Activated CD8-positive, alpha-beta T cell treated with anti-CD3 and anti-CD28 coated beads, Interleukin-2, amount 10 ng/mL, durations not matched to agents 7 days and 5 days (primary cell): ENCODE measurements at regions of chr5 and their contacts with region 1.

Region 1: DNA sequence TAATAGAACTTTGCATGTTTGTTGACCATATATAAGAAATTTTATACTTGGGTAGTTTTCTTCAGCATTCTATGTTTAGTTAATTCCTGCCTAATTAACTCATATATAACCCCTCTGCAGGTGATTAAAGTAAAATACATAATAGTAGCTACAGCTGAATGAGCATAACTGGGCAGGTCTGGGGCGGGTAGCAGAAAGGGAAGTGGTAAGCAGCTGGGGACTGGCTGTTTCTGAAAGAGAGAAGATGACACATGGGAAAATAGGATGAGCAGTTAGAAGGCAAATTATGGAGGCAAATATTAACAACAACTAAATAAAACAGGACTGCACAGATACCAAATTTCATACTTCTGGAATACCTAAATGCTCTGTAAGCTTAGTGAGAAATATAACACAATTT is 128.1 kb downstream of the CPLANE1 start:
- DNase-seq: no peak
- ATAC-seq: no peak
- H3K4me3 Mint-ChIP-seq: no peak overlapping the region
- H3K27ac Mint-ChIP-seq: no peak overlapping the region
- H3K4me1 Mint-ChIP-seq: peaks cover 19% of the 10 kb centered on the region
- H3K27me3 Mint-ChIP-seq: no peaks in the 10 kb centered on the region

Region 2: DNA sequence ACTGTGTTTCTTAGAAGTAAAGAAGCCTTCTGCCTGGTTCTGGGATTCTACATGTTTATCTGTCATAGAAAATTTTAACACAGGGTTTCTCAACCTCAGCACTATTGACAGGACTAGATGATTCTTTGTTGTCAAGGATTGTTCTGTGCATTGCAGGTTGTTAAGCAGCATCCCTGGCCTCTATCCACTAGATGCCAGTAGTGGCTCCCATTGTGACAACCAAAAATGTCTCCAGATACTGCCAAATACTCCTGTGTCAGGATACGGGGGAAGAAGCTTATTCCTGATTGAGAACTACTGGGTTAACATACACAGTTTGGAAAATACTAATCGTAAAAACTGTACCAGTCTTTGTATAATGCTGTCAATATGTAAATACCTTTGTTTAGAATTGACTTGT is 77.3 kb before region 1 on chr5:
- CTCF ChIA-PET with region 1: interaction called, 10 read pairs
- POLR2A ChIA-PET with region 1: no interaction called
- DNase-seq: peak; percentile 24
- ATAC-seq: no peak
- H3K4me3 Mint-ChIP-seq: no peak overlapping the region
- H3K27ac Mint-ChIP-seq: no peak overlapping the region
- H3K4me1 Mint-ChIP-seq: peaks cover 1% of the 10 kb centered on the region
- H3K27me3 Mint-ChIP-seq: no peaks in the 10 kb centered on the region

Region 3: DNA sequence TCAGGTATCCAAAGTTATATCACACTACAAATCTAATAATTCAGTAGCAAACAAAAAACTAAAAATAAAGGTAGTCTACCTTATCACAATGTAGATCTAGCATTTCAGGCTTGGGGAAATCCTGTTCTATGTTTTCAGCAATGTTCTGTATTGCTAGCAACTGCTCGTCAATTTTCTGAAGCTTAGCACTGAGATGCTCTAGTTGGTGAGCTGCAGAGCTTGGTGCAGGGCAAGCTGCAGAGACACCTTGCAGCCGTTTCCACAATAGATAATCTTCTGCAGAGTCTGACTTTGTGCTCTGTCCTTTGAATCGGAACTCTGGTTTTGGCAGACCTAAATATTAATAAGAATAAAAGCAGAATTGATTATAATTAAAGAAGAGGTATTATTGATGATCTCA is 32.6 kb after region 1 on chr5:
- CTCF ChIA-PET with region 1: no interaction called
- POLR2A ChIA-PET with region 1: no interaction called
- DNase-seq: no peak
- ATAC-seq: no peak
- H3K4me3 Mint-ChIP-seq: no peak overlapping the region
- H3K27ac Mint-ChIP-seq: no peak overlapping the region
- H3K4me1 Mint-ChIP-seq: peaks cover 6% of the 10 kb centered on the region
- H3K27me3 Mint-ChIP-seq: no peaks in the 10 kb centered on the region

Region 4: GRCh38 chr5:37197340-37198050 is 76.5 kb after region 1 on chr5:
- CTCF ChIA-PET with region 1: no interaction called
- POLR2A ChIA-PET with region 1: no interaction called
- DNase-seq: peak; percentile 58
- ATAC-seq: peak; percentile 82
- H3K4me3 Mint-ChIP-seq: peak overlapping the region; percentile 63
- H3K27ac Mint-ChIP-seq: peak overlapping the region; percentile 84
- H3K4me1 Mint-ChIP-seq: peaks cover 29% of the 10 kb centered on the region
- H3K27me3 Mint-ChIP-seq: no peaks in the 10 kb centered on the region

Region 5: DNA sequence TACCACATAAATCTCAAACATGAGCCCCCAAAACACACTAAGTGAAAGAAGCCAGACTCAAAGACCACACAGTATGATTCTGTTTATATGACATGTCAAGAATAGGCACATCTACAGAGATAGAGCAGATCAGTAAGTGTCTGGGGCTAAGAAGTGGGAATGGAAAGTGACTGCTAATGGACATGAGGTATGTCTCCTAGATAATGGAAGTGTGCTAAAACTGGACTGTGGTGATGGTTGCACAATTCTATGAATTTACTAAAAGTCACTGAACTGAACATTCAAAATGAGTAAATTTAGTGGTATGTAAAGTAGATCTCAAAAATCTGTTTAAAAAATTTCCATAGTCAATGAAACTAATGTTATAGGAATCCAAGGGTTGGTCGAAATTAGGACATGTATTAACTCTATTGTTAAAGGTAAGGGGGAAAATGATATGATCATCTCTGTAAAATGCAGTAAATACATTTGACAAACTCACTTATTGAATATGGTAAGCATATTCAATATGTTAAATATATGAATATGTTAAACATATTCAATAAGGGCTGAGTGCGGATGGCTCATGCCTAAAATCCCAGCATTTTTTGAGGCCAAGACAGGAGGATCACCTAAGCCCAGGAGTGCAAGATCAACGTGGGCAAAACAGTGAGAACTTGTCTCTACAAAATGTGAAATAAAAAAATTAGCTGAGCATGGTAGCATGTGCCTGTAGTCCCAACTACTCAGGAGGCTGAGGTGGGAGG is 198.2 kb after region 1 on chr5:
- CTCF ChIA-PET with region 1: no interaction called
- POLR2A ChIA-PET with region 1: no interaction called
- DNase-seq: no peak
- ATAC-seq: no peak
- H3K4me3 Mint-ChIP-seq: no peak overlapping the region
- H3K27ac Mint-ChIP-seq: no peak overlapping the region
- H3K4me1 Mint-ChIP-seq: no peaks in the 10 kb centered on the region
- H3K27me3 Mint-ChIP-seq: no peaks in the 10 kb centered on the region